ENCODE measurements at regions of chr6 and their contacts with region 1.

Region 1: DNA sequence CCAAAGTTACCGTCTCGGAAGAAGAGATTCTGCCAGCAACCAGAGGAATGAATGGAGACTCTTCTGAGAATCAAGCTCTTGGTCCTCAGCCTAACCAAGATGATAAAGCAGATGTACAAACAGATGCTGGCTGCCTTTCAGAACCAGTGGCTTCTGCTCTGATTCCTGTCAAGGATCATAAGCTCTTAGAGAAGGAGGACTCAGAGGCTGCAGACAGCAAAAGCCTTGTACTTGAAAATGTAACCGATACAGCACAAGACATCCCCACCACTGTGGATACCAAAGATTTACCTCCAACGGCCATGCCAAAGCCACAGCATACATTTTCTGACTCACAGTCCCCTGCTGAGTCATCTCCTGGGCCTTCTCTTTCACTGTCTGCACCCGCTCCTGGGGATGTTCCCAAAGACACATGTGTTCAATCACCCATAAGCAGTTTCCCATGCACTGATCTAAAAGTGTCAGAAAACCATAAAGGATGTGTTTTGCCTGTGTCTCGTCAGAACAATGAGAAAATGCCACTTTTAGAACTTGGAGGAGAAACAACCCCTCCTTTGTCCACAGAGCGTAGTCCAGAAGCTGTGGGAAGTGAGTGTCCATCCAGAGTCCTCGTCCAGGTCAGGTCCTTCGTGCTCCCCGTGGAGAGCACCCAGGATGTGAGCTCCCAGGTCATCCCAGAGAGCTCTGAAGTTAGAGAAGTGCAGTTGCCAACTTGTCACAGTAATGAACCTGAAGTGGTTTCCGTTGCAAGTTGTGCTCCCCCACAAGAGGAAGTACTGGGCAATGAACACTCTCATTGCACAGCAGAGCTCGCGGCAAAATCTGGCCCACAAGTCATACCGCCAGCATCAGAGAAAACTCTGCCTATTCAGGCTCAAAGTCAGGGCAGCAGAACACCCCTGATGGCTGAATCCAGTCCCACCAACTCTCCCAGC is 109.6 kb downstream of the RTN4IP1 start:
- DNase-seq: peak; percentile 74
- H3K4me3 Mint-ChIP-seq: peak overlapping the region; percentile 90
- H3K27ac Mint-ChIP-seq: peak overlapping the region; percentile 98
- H3K4me1 Mint-ChIP-seq: peaks cover 79% of the 10 kb centered on the region
- H3K27me3 Mint-ChIP-seq: no peaks in the 10 kb centered on the region

Region 2: GRCh38 chr6:104859225-104860146 is 1660.2 kb before region 1 on chr6 and contains the start of gene HACE1:
- intact Hi-C with region 1: loop called (anchors 5 kb)
- DNase-seq: peak; percentile 87
- H3K4me3 Mint-ChIP-seq: peak within 1 kb of the TSS; percentile 95
- H3K27ac Mint-ChIP-seq: peak within 1 kb of the TSS; percentile 82
- H3K4me1 Mint-ChIP-seq: peaks cover 24% of the 10 kb centered on the region
- H3K27me3 Mint-ChIP-seq: peaks cover 2% of the 10 kb centered on the region
- total RNA-seq, gene HACE1: 16.9 and 19.3 TPM in 2 replicates

Region 3: GRCh38 chr6:105992315-105992961 is 527.3 kb before region 1 on chr6:
- intact Hi-C with region 1: loop called (anchors 5 kb)
- DNase-seq: peak; percentile 91
- H3K4me3 Mint-ChIP-seq: peak overlapping the region; percentile 89
- H3K27ac Mint-ChIP-seq: peak overlapping the region; percentile 96
- H3K4me1 Mint-ChIP-seq: peaks cover 66% of the 10 kb centered on the region
- H3K27me3 Mint-ChIP-seq: peaks cover 24% of the 10 kb centered on the region

Region 4: DNA sequence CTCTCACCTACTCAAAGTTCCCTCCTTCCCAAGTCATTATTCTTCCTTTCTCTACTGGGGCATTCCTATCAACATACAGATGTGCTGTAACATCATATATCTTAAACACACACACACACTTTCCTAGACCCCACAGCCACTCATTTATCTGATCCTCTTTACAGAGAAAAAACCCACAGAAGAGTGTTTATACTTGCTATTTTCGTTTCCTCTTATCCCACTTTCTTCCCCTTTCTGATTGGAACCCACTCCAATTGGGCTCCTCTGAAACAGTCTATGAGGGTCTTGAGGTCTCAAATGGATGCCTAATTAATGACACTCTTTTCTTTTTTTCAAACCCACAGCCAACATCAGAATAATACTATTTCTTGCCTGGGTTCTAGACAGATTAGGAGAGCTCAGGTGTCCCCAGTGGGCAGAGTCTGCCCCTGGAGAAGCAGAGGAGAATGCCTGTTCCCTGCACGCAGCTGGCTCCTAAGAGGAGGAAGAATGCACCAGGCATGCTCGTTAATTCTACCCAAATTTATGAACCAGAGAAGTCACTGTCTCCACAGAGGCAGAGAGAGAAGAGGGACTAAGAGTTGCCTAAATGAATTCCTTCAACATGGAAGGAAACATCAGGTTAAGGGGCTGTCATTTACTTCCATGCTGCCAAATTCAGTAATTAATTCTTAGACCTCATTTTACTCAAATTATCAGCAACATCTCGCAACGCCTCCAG is 93.3 kb before region 1 on chr6:
- intact Hi-C with region 1: no loop called
- DNase-seq: no peak
- H3K4me3 Mint-ChIP-seq: no peak overlapping the region
- H3K27ac Mint-ChIP-seq: no peak overlapping the region
- H3K4me1 Mint-ChIP-seq: no peaks in the 10 kb centered on the region
- H3K27me3 Mint-ChIP-seq: peaks cover 3% of the 10 kb centered on the region

Region 5: GRCh38 chr6:106534564-106534982 is 14.8 kb after region 1 on chr6:
- intact Hi-C with region 1: loop called (anchors 1 kb)
- DNase-seq: no peak
- H3K4me3 Mint-ChIP-seq: peak overlapping the region; percentile 10
- H3K27ac Mint-ChIP-seq: peak overlapping the region; percentile 74
- H3K4me1 Mint-ChIP-seq: peaks cover 66% of the 10 kb centered on the region
- H3K27me3 Mint-ChIP-seq: no peaks in the 10 kb centered on the region

Region 6: DNA sequence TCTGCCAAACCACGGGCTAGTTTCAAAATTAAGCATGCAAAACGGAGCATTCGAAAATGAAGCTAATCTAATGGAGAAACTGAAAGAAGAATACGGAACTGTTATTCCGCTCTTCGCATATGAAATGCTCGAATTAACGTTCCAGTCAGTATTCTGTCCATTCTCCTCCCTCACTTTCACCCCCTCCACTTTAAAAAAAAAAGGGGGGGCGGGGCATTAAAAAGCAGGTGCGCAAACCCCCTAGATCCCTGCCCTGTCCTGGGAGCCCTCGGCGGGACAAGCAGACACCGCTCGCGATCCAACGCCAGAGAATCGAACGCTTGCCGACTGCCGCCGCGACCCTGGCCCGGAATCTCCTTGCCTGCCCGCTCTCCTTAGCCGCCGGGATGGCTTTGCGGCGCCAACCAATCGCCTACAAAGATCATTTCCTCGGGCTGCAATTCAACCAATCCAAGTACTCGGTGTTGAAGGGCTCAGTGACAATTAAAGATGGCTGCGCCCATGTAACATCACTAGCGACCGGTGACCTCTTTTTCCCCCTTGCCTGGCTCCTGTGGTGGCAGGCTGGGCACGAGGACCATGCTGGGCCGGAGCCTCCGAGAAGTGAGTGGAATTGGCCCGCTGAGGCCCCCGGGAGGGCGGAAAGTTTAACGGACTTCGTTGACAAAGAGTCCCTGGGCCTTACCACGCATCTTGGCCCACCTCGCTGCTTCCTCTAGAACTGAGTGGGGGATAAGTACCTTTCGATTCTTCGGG is 109.6 kb after region 1 on chr6 and contains the starts of genes QRSL1 and RTN4IP1:
- intact Hi-C with region 1: loop called (anchors 2 kb)
- DNase-seq: peak; percentile 84
- H3K4me3 Mint-ChIP-seq: peak within 1 kb of the TSS; percentile 95
- H3K27ac Mint-ChIP-seq: peak within 1 kb of the TSS; percentile 98
- H3K4me1 Mint-ChIP-seq: peaks cover 33% of the 10 kb centered on the region
- H3K27me3 Mint-ChIP-seq: no peaks in the 10 kb centered on the region
- total RNA-seq, gene QRSL1: 18.6 and 21.9 TPM in 2 replicates
- total RNA-seq, gene RTN4IP1: 6.4 and 6.8 TPM in 2 replicates

Region 7: DNA sequence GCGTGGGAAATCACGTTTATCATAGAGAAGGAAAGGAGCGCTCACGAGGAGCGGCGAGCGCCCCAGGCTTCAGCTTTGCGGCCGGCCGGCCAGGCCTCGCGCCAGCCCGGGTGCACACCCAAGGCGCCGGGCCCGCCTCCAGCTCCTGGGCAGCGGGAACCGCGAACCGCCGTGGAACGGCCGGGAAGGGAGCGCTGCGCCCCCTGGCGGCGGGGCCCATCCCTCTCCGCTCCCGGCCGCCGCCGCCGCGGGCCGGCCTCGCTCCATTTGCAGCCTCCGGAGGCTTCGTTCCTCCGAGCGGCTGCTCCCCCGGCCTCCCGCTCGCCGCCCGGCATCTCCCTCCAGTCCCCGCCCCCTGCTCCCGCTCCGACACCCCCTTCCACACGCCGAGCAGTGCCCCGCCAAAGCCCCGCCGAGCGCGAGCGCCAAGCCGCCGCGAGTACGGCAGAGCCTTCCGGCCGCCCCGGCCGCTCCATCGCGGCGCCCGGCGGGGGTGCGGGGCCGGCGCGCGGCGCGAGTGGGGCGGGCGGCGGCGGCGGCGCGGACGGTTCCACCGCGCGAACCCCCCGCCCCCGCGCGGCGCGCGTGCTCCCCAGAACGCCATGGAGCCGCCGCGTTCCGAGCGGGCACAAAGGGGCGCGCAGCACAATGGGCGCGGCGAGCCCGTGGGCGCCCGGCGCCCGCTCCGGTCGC is 594.6 kb after region 1 on chr6:
- intact Hi-C with region 1: loop called (anchors 10 kb)
- DNase-seq: peak; percentile 70
- H3K4me3 Mint-ChIP-seq: peak overlapping the region; percentile 82
- H3K27ac Mint-ChIP-seq: peak overlapping the region; percentile 77
- H3K4me1 Mint-ChIP-seq: peaks cover 26% of the 10 kb centered on the region
- H3K27me3 Mint-ChIP-seq: peaks cover 18% of the 10 kb centered on the region